H1 (cell line): ENCODE measurements at regions of chr1 and their contacts with region 1.

Region 1: DNA sequence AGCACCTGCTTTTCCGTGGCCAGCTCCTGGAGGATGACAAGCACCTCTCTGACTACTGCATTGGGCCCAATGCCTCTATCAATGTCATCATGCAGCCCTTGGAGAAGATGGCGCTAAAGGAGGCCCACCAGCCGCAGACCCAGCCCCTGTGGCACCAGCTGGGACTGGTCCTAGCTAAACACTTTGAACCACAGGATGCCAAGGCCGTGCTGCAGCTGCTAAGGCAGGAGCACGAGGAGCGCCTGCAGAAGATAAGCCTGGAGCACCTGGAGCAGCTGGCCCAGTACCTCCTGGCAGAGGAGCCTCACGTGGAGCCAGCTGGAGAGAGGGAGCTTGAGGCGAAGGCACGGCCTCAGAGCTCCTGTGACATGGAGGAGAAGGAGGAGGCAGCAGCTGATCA is 413 bp downstream of the UBL4B start:
- DNase-seq: no peak
- H3K4me3 ChIP-seq: no peak overlapping the region
- H3K27ac ChIP-seq: no peak overlapping the region
- H3K4me1 ChIP-seq: no peaks in the 10 kb centered on the region; a peak in 1 of 7 replicates
- H3K27me3 ChIP-seq: no peaks in the 10 kb centered on the region; a peak in 1 of 7 replicates
- CTCF ChIP-seq: no peak
- EP300 ChIP-seq: no peak
- POLR2A ChIP-seq: no peak
- RAD21 ChIP-seq: no peak

Region 2: GRCh38 chr1:110053557-110054428 is 58.9 kb before region 1 on chr1:
- CTCF ChIA-PET with region 1: interaction called, 1,450 read pairs
- POLR2A ChIA-PET with region 1: interaction called, 3 read pairs
- DNase-seq: peak in 1 of 2 experiments; percentile 97
- H3K4me3 ChIP-seq: no peak overlapping the region
- H3K27ac ChIP-seq: no peak overlapping the region
- H3K4me1 ChIP-seq: no peaks in the 10 kb centered on the region
- H3K27me3 ChIP-seq: no peaks in the 10 kb centered on the region
- CTCF ChIP-seq: peak; percentile 87 to 99 (median 99)
- EP300 ChIP-seq: no peak
- POLR2A ChIP-seq: no peak
- RAD21 ChIP-seq: peak; percentile 91 to 96

Region 3: GRCh38 chr1:110060034-110060661 is 52.5 kb before region 1 on chr1:
- CTCF ChIA-PET with region 1: interaction called, 1,450 read pairs
- POLR2A ChIA-PET with region 1: interaction called, 3 read pairs
- DNase-seq: peak in 1 of 2 experiments; percentile 94
- H3K4me3 ChIP-seq: no peak overlapping the region
- H3K27ac ChIP-seq: no peak overlapping the region
- H3K4me1 ChIP-seq: no peaks in the 10 kb centered on the region
- H3K27me3 ChIP-seq: peaks cover 0 to 8% (median 4%) of the 10 kb centered on the region in 4 experiments; a peak in 5 of 7 replicates
- CTCF ChIP-seq: peak; percentile 67 to 97 (median 97)
- EP300 ChIP-seq: no peak
- POLR2A ChIP-seq: no peak
- RAD21 ChIP-seq: peak in 1 of 2 experiments; percentile 38; a peak in 1 of 4 replicates